Activated CD8-positive, alpha-beta memory T cell treated with anti-CD3 and anti-CD28 coated beads, Interleukin-2, amount 10 ng/mL, durations not matched to agents 7 days and 5 days (primary cell): ENCODE measurements at regions of chr2 and their contacts with region 1.

Region 1: DNA sequence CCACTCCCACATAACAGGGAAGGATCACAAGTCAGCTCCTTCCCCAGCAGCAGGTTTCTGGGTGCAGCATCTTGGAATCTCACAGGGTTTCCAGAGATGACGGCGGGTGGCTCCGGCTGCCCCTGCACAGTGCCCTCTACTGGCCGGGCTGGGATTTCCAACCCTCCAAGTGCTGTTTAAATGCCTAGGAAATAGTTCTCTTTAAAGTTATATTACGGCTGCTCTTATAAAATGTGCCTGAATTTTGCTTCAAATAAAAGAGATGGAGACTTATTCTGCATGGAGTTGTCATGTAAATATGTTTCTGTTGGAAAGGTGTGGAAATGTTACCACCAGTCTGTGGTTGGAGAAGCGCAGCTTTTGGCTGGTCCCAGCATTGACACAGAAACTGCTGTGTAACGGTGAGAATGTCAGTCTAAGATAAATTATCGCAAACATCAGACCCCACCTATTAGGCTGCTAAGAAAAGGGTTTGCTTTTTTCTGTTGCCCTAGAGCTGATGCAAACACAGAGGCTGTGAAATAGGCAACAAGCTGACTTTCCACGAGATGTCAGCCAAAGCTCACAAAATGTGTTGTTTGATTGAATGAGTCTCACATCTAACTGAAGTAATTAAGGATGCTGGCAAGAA is 3.3 kb upstream of the HJURP start:
- DNase-seq: peak; percentile 73
- ATAC-seq: no peak
- H3K4me3 Mint-ChIP-seq: no peak overlapping the region
- H3K27ac Mint-ChIP-seq: no peak overlapping the region
- H3K4me1 Mint-ChIP-seq: peaks cover 22% of the 10 kb centered on the region
- H3K27me3 Mint-ChIP-seq: no peaks in the 10 kb centered on the region

Region 2: GRCh38 chr2:233871432-233871831 is 13.8 kb after region 1 on chr2:
- CTCF ChIA-PET with region 1: interaction called, 10 read pairs
- DNase-seq: no peak
- ATAC-seq: no peak
- H3K4me3 Mint-ChIP-seq: no peak overlapping the region
- H3K27ac Mint-ChIP-seq: no peak overlapping the region
- H3K4me1 Mint-ChIP-seq: peaks cover 15% of the 10 kb centered on the region
- H3K27me3 Mint-ChIP-seq: peaks cover 38% of the 10 kb centered on the region

Region 3: DNA sequence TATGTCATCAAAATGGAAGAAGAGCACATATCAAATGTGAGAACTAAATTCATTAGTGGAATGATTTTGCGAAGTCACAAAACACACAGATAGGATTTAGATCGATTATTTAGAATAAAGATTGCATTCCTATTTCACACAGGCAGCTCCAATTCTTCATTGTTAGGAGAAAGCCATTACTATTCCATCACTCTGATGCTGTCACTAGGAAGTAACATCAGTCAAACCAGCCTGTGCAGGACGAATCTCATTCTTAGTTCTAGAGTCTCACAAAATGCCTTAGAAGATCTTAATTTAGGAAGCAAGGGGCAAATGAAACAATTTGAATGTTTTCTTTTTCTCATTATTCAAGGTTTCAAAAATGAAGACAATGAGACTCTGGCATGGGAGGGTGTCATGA is 148.9 kb after region 1 on chr2:
- CTCF ChIA-PET with region 1: no interaction called
- DNase-seq: no peak
- ATAC-seq: no peak
- H3K4me3 Mint-ChIP-seq: no peak overlapping the region
- H3K27ac Mint-ChIP-seq: no peak overlapping the region
- H3K4me1 Mint-ChIP-seq: peaks cover 17% of the 10 kb centered on the region
- H3K27me3 Mint-ChIP-seq: peaks cover 45% of the 10 kb centered on the region